Spleen (tissue), 13 donors: ENCODE measurements at regions of chr11 and their contacts with region 1.

Region 1: GRCh38 chr11:120108154-120108865 is 29.6 kb downstream of the TRIM29 start:
- DNase-seq: peak; percentile 88
- H3K4me3 ChIP-seq: no peak overlapping the region
- H3K27ac ChIP-seq: no peak overlapping the region
- H3K4me1 ChIP-seq: no peaks in the 10 kb centered on the region
- H3K27me3 ChIP-seq: peaks cover 0 to 61% (median 0%) of the 10 kb centered on the region in 7 donors
- CTCF ChIP-seq: peak; percentile 79 to 98 (median 95)
- POLR2A ChIP-seq: no peak

Region 2: GRCh38 chr11:119481021-119481666 is 627.2 kb before region 1 on chr11:
- intact Hi-C with region 1: loop called (anchors 10 kb)
- DNase-seq: peak; percentile 91
- H3K4me3 ChIP-seq: no peak overlapping the region
- H3K27ac ChIP-seq: no peak overlapping the region
- H3K4me1 ChIP-seq: peaks cover 0 to 7% (median 4%) of the 10 kb centered on the region in 6 donors
- H3K27me3 ChIP-seq: peaks cover 0 to 47% (median 9%) of the 10 kb centered on the region in 7 donors
- CTCF ChIP-seq: peak; percentile 61 to 97 (median 92)
- POLR2A ChIP-seq: no peak

Region 3: GRCh38 chr11:119666463-119667131 is 441.7 kb before region 1 on chr11:
- intact Hi-C with region 1: loop called (anchors 5 kb)
- DNase-seq: peak; percentile 92
- H3K4me3 ChIP-seq: no peak overlapping the region
- H3K27ac ChIP-seq: no peak overlapping the region
- H3K4me1 ChIP-seq: peaks cover 0 to 20% (median 8%) of the 10 kb centered on the region in 6 donors
- H3K27me3 ChIP-seq: peaks cover 0 to 9% (median 0%) of the 10 kb centered on the region in 7 donors
- CTCF ChIP-seq: peak; percentile 84 to 96 (median 91)
- POLR2A ChIP-seq: no peak

Region 4: GRCh38 chr11:120151536-120151935 is 43.2 kb after region 1 on chr11:
- intact Hi-C with region 1: no loop called
- DNase-seq: no peak
- H3K4me3 ChIP-seq: no peak overlapping the region
- H3K27ac ChIP-seq: no peak overlapping the region
- H3K4me1 ChIP-seq: no peaks in the 10 kb centered on the region
- H3K27me3 ChIP-seq: peaks cover 0 to 28% (median 8%) of the 10 kb centered on the region in 7 donors
- CTCF ChIP-seq: no peak
- POLR2A ChIP-seq: no peak